ENCODE measurements at regions of chr11 and their contacts with region 1.

Region 1: DNA sequence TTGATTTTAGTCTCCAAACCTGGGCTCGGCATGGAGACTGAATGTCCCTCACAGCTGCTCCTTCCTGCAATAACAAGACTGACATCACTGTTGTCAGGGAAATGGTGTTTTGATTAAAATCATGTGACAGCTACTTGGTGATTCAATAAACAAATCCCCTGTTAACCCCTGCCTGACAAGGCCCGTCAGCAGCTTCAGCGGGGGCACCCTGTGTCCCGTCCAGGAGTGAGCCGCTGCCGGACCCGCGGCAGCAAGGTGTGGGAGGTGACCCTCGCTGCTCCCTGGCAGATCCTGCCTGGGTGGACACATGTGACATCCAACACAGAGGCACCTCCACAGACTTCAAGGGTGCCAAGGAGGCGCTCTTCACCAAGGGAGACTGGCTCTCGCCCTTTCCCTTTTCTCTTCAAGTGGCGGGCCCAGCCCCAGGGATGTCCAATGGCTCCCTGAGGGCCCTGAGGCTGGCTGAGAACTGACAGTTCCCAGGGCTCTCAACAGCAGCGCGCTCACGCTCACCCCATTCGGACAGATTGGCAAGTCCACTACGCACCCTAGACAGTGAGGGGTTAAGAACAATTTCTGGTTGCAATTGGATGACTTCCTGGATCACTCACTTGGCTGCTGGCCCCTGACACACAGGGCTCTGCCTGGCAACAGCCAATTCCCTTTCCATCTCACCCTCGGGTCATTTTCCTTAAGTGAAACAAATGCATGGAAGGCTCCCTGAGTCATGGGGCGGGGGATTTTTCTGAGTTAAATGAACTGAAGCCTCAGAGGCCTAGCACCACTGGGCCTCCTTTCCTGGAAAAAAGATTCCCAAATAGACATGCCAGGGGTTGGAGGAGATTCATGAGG is 30.7 kb downstream of the PPP2R1B start:
- DNase-seq: peak; percentile 60 to 88 (median 79)
- H3K4me3 ChIP-seq: peak overlapping the region; percentile 8 to 73 (median 52)
- H3K27ac ChIP-seq: peak overlapping the region; percentile 96 to 100 (median 100)
- H3K27me3 ChIP-seq: no peaks in the 10 kb centered on the region
- CTCF ChIP-seq: peak in 40 of 56 donors; percentile 3 to 68 (median 34)

Region 2: DNA sequence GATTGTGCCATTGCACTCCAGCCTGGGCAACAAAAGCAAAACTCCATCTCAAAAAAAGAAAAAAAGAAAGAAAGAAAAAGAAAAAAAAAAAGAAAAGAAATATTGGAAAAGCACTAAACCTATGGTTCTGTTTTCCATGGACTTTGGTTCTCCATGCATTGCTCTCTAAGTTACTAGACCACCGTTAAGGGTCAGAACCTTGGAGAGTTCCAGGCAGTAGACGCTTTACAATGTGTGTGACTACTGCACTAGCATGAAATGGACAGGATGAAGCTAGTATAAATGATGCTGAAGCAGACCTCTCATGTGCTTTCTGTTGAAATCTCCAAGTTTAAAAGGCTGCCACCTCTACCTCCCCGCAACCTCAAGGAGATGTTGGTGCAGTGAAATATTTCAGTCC is 69.7 kb before region 1 on chr11:
- intact Hi-C with region 1: no loop called
- DNase-seq: no peak
- H3K4me3 ChIP-seq: no peak overlapping the region
- H3K27ac ChIP-seq: no peak overlapping the region
- H3K27me3 ChIP-seq: no peaks in the 10 kb centered on the region
- CTCF ChIP-seq: no peak

Region 3: GRCh38 chr11:111761036-111761435 is 25.5 kb after region 1 on chr11:
- intact Hi-C with region 1: loop called in 1 of 2 experiments (anchors 1 kb)
- DNase-seq: peak in 1 of 10 donors; percentile 79
- H3K4me3 ChIP-seq: peak overlapping the region in 1 of 59 donors; percentile 2
- H3K27ac ChIP-seq: peak overlapping the region in 44 of 59 donors; percentile 0 to 94 (median 35)
- H3K27me3 ChIP-seq: no peaks in the 10 kb centered on the region
- CTCF ChIP-seq: no peak

Region 4: GRCh38 chr11:111851636-111852035 is 116.1 kb after region 1 on chr11:
- intact Hi-C with region 1: no loop called
- DNase-seq: no peak
- H3K4me3 ChIP-seq: no peak overlapping the region
- H3K27ac ChIP-seq: peak overlapping the region in 1 of 59 donors; percentile 26
- H3K27me3 ChIP-seq: no peaks in the 10 kb centered on the region
- CTCF ChIP-seq: peak in 31 of 56 donors; percentile 8 to 54 (median 34)